HAP-1 (cell line): ENCODE measurements at regions of chr4 and their contacts with region 1.

Region 1: GRCh38 chr4:47686294-47686872 is 151.5 kb downstream of the CORIN start:
- DNase-seq: peak; percentile 45 to 81
- H3K4me3 ChIP-seq: no peak overlapping the region
- H3K4me1 ChIP-seq: no peaks in the 10 kb centered on the region
- H3K27me3 ChIP-seq: peaks cover 7% of the 10 kb centered on the region

Region 2: DNA sequence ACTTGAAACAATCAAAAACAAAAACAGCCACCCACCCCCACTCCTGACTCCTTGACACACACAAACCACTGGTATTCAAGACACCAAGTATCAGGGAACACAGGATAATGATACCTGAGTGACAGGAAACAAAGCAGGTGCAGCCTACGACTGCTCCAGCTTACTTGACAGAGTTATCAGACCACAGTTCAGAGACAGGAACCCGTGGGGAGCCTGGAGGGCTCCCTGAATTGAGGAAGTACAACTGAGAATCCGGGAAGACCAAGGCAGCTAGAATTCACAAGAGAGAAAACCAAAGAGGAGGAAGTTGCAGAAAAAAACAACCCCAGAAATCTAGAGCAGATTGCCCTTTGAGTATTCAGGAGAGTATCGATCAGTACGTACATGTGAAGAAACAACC is 243.4 kb before region 1 on chr4:
- in situ Hi-C with region 1: no loop called
- DNase-seq: no peak
- H3K4me3 ChIP-seq: no peak overlapping the region
- H3K4me1 ChIP-seq: peaks cover 25% of the 10 kb centered on the region
- H3K27me3 ChIP-seq: no peaks in the 10 kb centered on the region

Region 3: DNA sequence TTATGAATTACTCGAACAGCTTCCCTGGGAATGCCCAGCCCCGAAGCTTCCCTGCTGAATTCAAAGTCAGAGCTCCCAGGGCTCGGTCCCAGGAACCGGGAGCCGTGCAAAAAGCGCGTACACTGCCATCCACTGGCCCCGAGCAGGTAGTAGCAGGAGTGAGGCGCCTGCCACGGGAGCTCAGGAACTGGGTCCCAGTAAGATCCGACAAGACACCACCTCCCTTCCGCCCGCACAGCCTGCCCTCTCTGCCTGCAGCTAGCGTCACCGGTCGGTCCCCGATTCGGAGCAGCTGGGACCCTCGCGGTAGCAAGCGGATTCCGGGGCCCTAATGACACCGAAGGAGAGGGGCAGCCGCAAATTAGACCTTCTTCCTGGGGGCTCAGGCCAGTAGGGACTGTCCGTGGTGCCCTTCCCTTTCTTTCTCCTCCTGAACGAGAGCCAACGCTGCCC is 150.3 kb after region 1 on chr4:
- in situ Hi-C with region 1: loop called (anchors 5 kb)
- DNase-seq: peak; percentile 90 to 92
- H3K4me3 ChIP-seq: peak overlapping the region; percentile 49
- H3K4me1 ChIP-seq: peaks cover 7% of the 10 kb centered on the region
- H3K27me3 ChIP-seq: no peaks in the 10 kb centered on the region

Region 4: GRCh38 chr4:47876784-47877546 is 190.6 kb after region 1 on chr4:
- in situ Hi-C with region 1: no loop called
- DNase-seq: no peak
- H3K4me3 ChIP-seq: no peak overlapping the region
- H3K4me1 ChIP-seq: no peaks in the 10 kb centered on the region
- H3K27me3 ChIP-seq: no peaks in the 10 kb centered on the region

Region 5: GRCh38 chr4:47933840-47934239 is 247.5 kb after region 1 on chr4:
- in situ Hi-C with region 1: loop called (anchors 10 kb)
- DNase-seq: peak in 1 of 2 experiments; percentile 64
- H3K4me3 ChIP-seq: no peak overlapping the region
- H3K4me1 ChIP-seq: no peaks in the 10 kb centered on the region
- H3K27me3 ChIP-seq: peaks cover 16% of the 10 kb centered on the region; the same call in 1 of the 2 replicates

Region 6: DNA sequence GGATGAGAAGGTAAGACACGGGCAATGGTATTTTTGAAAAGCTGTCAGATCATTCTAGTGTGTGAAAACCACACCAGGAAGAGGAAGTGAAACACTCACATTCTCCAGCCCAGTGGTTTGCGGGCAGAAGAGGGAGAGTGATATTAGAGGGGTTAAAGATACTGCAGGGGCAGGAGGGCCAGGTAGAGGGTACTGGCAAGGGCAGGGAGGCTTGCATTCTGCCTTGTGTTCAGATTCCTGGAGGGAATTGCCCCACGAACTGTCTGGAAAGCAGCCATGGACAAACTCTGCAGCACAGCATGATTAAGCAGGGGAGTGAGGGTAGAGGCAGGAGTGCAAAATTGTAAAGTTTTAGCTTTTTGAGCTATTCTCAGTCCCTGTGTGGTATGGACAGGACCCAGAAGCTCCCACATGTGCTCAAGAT is 361.1 kb after region 1 on chr4:
- in situ Hi-C with region 1: no loop called
- DNase-seq: no peak
- H3K4me3 ChIP-seq: no peak overlapping the region
- H3K4me1 ChIP-seq: peaks cover 7% of the 10 kb centered on the region
- H3K27me3 ChIP-seq: no peaks in the 10 kb centered on the region

Region 7: DNA sequence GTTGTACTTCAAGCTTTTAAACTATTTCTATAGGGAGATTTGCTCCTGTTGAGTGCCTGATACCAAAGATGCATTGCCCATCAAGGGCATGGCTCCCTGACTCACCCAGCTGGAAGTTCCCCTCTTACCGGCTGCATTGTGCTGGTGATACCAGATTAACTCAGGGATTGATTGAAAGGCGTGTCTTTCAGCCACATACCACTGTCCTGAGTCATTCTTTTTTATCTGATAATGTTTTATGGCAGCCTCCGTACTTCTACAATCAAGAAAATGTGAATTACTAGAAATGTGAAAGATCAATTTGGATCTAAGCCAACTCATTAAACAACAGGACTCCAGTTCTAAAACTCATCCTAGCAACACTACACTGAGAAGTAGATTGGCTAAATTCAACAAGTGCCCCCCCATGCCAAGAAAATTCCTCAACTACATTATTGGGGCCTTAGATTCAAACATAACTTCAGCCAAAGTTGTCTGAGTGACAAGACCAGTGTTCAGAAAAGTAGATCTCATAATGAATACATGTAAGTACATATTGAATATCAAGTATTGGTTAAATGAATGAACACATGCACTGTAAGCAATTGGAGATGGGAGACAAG is 407.7 kb after region 1 on chr4:
- in situ Hi-C with region 1: loop called (anchors 25 kb)
- DNase-seq: peak; percentile 39 to 42
- H3K4me3 ChIP-seq: no peak overlapping the region
- H3K4me1 ChIP-seq: peaks cover 9% of the 10 kb centered on the region
- H3K27me3 ChIP-seq: no peaks in the 10 kb centered on the region; the same call in 1 of the 2 replicates